Activated CD4-positive, alpha-beta T cell treated with anti-CD3 and anti-CD28 coated beads, Interleukin-2, amount 10 ng/mL, durations not matched to agents 24 days and 14 days (primary cell): ENCODE measurements at regions of chr4 and their contacts with region 1.

Region 1: DNA sequence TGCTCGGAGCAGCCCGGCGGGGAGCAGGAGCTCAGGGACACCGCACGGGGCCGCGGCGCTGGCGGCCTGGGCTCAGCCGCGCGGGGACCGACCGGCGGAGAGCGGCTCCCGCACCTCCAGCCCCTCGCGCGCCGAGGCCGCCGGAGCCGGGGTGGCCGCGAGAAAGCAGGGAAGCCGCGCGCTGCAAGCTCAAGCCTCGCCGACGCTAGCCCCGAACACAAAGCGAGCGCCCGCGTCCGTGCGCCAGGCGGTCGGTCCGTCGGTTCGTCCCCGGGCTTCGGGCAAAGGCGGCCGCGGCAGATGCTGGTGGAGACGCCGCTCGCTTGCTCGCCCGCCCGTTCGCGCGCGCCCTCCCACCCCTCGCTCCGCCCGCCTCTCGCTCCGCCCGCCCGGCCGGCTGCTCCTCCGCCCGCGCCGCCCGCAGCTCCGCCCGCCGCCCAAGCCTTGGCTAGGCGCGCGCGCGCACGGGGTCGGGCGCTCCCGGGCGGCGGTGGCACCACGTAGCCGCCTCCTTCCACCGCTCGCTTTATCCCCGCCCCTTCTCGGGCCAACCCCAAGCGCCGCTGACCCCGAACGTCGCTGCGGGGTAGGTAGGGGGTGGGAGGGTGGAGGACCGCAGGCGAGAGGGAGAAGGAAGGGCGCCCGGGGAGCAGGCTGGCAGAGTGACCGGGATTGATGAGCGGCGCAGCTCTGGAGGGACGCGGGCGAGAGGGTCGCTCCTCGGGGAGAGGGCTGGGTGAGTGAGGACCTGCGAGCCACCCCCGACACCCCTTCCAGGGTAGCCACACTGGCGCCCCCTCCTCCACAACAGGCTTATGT is at the start of gene TSPAN5:
- DNase-seq: peak; percentile 95
- H3K4me3 Mint-ChIP-seq: peak within 1 kb of the TSS; percentile 93
- H3K27ac Mint-ChIP-seq: peak within 1 kb of the TSS; percentile 81
- H3K4me1 Mint-ChIP-seq: peaks cover 70% of the 10 kb centered on the region
- H3K27me3 Mint-ChIP-seq: no peaks in the 10 kb centered on the region
- total RNA-seq, gene TSPAN5: 30.4 and 30.7 TPM in 2 replicates

Region 2: GRCh38 chr4:98446499-98447375 is 211.8 kb before region 1 on chr4:
- intact Hi-C with region 1: loop called (anchors 1 kb)
- DNase-seq: peak; percentile 87
- H3K4me3 Mint-ChIP-seq: peak overlapping the region; percentile 78
- H3K27ac Mint-ChIP-seq: peak overlapping the region; percentile 96
- H3K4me1 Mint-ChIP-seq: peaks cover 39% of the 10 kb centered on the region
- H3K27me3 Mint-ChIP-seq: no peaks in the 10 kb centered on the region

Region 3: DNA sequence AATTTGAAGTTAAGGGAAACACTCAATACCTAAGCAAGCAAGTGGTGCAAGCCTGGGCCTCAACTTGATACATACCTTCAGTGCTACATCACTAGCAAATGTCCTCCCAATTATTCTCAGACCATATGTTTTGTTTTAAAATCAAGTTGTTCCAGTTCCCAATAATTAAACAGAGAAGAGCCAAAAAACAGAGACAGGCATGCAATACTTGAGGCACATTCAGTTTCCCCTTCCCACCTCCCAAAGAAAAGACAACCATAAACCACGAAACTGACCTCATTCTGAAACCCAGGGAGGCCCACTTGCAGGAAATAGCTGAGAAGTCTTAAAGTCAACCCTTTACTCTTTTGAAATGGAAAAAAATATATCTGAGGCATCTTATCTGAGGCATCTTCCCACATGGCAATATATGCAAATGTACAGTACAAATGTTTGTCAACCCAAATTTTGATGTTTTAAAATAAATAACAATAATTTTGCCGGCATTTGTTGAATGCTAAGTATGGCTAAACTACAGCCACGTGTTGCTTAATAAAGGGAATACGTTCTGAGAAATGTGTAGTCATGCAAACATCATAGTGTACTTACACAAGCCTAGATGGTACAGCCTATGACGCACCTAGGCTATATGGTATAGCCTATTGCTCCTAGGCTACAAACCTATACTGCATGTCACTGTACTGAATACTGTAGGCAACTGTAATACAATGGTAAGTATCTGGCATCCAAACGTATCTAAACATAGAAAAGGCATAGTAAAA is 147.6 kb before region 1 on chr4:
- intact Hi-C with region 1: loop called (anchors 1 kb)
- DNase-seq: peak; percentile 81
- H3K4me3 Mint-ChIP-seq: peak overlapping the region; percentile 73
- H3K27ac Mint-ChIP-seq: peak overlapping the region; percentile 78
- H3K4me1 Mint-ChIP-seq: peaks cover 62% of the 10 kb centered on the region
- H3K27me3 Mint-ChIP-seq: no peaks in the 10 kb centered on the region

Region 4: DNA sequence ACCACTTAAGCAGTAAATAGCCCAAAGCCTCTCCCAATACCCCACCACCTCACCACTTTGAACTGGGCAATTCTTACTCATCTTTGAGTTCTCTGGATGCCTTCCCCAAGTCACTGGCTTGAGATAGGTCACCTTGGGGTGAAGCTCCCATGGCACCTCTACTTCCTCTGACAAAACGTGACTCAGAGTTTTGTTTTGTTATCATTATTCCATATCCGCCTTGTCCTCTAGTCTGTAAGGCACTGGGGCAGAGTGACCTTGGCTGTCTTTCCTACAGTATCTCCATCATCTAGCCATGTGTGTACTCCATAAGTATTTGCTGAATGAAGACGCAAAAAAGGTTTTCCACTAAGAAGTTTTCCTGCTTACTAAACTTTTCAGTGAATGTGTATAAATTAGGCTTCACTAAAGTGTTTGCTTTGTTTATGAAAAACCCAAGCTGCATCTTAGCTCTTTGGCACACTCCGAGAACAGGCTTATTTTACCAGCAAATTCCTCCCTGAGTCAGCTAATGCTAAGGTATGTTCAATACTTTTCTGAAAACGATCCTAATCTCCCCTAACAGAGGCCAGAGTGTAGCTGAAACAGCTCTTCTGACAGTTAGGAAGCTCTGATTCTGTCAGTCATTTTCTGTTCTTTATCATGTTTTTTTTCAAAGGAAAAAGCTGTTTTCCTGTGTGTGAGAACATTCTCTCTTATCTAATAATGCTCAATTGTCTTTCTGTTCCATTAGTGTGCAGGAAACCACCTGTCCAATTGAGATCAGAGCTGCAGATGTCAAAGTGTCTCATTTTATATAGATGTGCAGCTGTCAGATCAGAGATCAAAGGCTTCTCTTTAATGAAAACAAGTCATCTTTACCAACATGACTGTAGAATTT is 30.2 kb after region 1 on chr4:
- intact Hi-C with region 1: loop called (anchors 2 kb)
- DNase-seq: peak; percentile 57
- H3K4me3 Mint-ChIP-seq: no peak overlapping the region
- H3K27ac Mint-ChIP-seq: peak overlapping the region; percentile 14
- H3K4me1 Mint-ChIP-seq: peaks cover 19% of the 10 kb centered on the region
- H3K27me3 Mint-ChIP-seq: no peaks in the 10 kb centered on the region

Region 5: DNA sequence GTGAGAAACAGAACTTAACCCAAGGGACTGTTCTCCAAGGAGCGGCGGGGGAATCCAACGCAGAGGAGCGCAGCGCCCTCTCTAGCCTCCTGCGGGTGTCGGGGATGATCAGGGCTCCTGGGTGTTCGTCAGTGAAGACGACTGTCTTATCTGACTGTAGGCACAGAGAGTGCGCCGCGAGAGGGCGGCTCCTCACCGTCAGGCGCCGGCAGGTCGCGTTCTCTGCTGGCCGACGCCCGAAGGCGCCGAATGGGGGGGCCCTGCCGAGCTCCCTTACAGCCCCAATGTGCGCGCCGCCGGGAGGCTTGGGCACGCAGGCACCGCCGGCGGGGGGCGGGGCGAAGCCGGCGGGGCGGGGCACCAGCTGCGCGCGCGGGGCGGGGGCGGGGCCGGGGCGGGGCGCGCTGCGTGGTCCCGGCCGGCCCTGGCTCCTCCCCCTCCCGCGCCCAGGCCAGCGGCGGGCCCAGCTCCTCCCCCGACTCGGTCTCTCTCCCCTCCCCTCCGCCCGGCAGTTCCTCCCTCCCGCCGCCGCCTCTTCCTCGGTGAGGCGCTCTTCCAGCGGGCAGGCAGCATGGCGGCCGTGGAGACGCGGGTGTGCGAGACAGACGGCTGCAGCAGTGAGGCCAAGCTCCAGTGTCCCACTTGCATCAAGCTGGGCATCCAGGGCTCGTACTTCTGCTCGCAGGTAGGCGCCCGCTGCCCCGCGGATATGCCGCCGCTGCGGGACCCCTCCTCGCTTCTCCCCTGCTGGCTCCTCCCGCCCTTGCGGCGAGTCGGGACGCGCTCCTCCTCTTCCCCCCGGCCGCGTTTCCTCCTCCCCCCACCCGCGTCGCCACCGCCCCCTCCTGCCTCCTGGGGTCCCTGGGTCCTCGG is 336.9 kb after region 1 on chr4 and contains the start of gene METAP1:
- intact Hi-C with region 1: loop called (anchors 2 kb)
- DNase-seq: peak; percentile 98
- H3K4me3 Mint-ChIP-seq: peak within 1 kb of the TSS; percentile 89
- H3K27ac Mint-ChIP-seq: peak within 1 kb of the TSS; percentile 98
- H3K4me1 Mint-ChIP-seq: peaks cover 32% of the 10 kb centered on the region
- H3K27me3 Mint-ChIP-seq: peaks cover 3% of the 10 kb centered on the region
- total RNA-seq, gene METAP1: 61.2 and 63.3 TPM in 2 replicates

Region 6: DNA sequence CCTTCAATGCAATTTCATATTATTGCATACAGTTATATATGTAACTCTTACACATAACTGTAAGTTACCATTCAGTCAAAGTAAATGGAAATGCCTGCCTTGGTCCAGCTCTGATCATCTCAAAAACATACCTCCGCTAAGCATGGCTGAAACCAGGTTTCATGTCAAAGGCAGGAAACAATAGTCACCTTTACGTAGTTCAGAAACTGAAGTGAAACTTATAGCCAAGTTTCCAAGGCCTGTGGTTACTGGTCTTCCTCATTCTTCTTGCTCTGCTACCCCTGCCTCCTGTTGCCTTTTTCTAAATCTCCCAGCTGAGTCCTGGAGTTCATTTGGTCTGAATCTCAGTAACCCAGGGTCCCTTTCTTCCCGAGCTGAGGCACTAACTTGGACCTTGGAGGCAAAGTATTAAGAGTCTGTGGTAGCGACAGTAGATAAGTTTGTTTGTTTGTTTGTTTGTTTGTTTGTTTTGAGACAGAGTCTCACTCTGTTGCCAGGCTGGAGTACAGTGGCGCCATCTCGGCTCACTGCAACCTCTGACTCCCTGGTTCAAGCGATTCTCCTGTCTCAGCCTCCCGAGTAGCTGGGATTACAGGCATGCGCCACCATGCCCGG is 1189.0 kb after region 1 on chr4:
- intact Hi-C with region 1: loop called (anchors 5 kb)
- DNase-seq: peak; percentile 84
- H3K4me3 Mint-ChIP-seq: peak overlapping the region; percentile 58
- H3K27ac Mint-ChIP-seq: peak overlapping the region; percentile 92
- H3K4me1 Mint-ChIP-seq: peaks cover 67% of the 10 kb centered on the region
- H3K27me3 Mint-ChIP-seq: no peaks in the 10 kb centered on the region